Common myeloid progenitor, CD34-positive (primary cell): ENCODE measurements at regions of chr5 and their contacts with region 1.

Region 1: DNA sequence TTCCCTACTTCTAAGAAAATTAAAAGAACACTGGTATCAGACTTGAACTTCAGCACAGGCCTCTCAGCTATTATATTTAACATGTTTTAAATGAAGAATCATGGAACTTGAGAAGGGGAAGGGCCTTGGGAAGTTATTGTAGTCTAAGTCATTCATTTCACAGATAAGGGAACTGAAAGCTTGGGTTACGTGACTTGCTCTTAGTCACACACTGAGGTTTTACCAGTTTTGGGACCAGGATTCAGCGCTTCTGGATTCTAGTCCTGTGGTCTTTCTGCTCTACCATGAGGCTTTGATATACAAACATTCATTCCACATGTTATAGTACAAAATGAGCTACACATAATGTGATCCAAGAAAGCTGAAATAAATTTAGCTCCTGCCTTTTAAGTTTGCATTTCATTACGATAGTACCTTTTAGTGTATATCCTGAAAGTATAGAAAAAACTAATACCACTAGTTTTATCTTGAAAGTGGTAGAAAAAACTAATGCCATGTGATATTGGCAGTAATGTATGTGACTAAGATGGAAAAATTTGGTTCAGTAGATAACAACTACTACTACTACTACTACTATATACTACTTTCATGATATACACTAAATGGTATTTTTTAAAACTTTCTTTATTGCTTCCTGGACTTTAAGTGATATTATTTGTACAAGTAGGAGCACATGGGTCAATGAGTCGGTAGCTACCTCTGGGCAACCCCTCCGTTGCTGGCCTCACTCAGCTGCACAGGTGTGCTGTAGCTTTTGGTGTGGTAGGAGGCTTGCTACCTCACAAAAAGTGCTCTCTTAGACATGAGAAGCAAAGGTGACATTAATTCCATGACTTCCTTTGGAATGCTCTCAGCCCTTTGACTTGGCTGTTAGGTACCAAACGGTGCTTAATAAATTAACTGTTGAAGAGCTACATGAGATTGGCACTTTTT is 40.7 kb downstream of the F2RL2 start:
- DNase-seq: peak; percentile 65 to 89 (median 86)
- H3K4me3 ChIP-seq: peak overlapping the region in 1 of 7 experiments; percentile 24
- H3K27ac ChIP-seq: peak overlapping the region; percentile 0 to 57
- H3K4me1 ChIP-seq: peaks cover 8 to 33% (median 25%) of the 10 kb centered on the region in 4 experiments
- H3K27me3 ChIP-seq: no peaks in the 10 kb centered on the region

Region 2: GRCh38 chr5:76074487-76075065 is 507.9 kb before region 1 on chr5:
- CTCF ChIA-PET with region 1: interaction called, 16 read pairs
- POLR2A ChIA-PET with region 1: no interaction called
- DNase-seq: peak; percentile 45 to 65 (median 65)
- H3K4me3 ChIP-seq: no peak overlapping the region
- H3K27ac ChIP-seq: no peak overlapping the region
- H3K4me1 ChIP-seq: no peaks in the 10 kb centered on the region
- H3K27me3 ChIP-seq: peaks cover 6 to 21% (median 18%) of the 10 kb centered on the region in 5 experiments

Region 3: DNA sequence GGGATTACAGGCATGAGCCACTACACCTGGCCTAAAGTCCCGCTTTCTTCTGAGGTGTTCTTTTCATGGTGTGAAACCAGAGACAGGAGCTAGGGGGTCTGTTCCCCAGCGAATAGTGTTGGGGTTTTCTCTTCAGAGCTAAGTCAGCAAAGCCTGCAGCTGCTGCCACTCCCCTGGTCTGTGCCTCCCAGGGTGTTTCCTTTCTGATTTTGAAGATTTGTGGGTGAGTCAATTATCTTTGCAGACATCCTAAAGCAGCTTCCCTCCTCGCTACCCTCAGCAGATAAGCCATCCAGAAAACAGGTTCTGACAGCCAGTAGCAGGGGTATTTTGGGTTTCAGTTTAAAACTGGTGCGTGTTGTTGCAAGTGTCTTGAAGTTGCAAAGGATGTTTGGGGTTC is 251.4 kb before region 1 on chr5:
- CTCF ChIA-PET with region 1: interaction called, 20 read pairs
- POLR2A ChIA-PET with region 1: interaction called, 3 read pairs
- DNase-seq: peak; percentile 80 to 97 (median 95)
- H3K4me3 ChIP-seq: peak overlapping the region in 3 of 7 experiments; percentile 1 to 54 (median 40)
- H3K27ac ChIP-seq: peak overlapping the region; percentile 36 to 46
- H3K4me1 ChIP-seq: peaks cover 35 to 80% (median 73%) of the 10 kb centered on the region in 4 experiments
- H3K27me3 ChIP-seq: no peaks in the 10 kb centered on the region

Region 4: GRCh38 chr5:76544268-76544926 is 38.1 kb before region 1 on chr5:
- CTCF ChIA-PET with region 1: interaction called, 30 read pairs
- POLR2A ChIA-PET with region 1: interaction called, 3 read pairs
- DNase-seq: peak; percentile 83 to 88 (median 88)
- H3K4me3 ChIP-seq: peak overlapping the region in 5 of 7 experiments; percentile 11 to 62 (median 51)
- H3K27ac ChIP-seq: peak overlapping the region; percentile 90 to 93
- H3K4me1 ChIP-seq: peaks cover 53 to 100% (median 89%) of the 10 kb centered on the region in 4 experiments
- H3K27me3 ChIP-seq: no peaks in the 10 kb centered on the region

Region 5: GRCh38 chr5:76565009-76565408 is 17.5 kb before region 1 on chr5:
- CTCF ChIA-PET with region 1: interaction called, 11 read pairs
- POLR2A ChIA-PET with region 1: no interaction called
- DNase-seq: no peak
- H3K4me3 ChIP-seq: no peak overlapping the region
- H3K27ac ChIP-seq: no peak overlapping the region
- H3K4me1 ChIP-seq: no peaks in the 10 kb centered on the region
- H3K27me3 ChIP-seq: no peaks in the 10 kb centered on the region

Region 6: GRCh38 chr5:76571559-76571958 is 10.9 kb before region 1 on chr5:
- CTCF ChIA-PET with region 1: interaction called, 35 read pairs
- POLR2A ChIA-PET with region 1: interaction called, 5 read pairs
- DNase-seq: peak in 2 of 3 donors; percentile 49 to 55
- H3K4me3 ChIP-seq: no peak overlapping the region
- H3K27ac ChIP-seq: no peak overlapping the region
- H3K4me1 ChIP-seq: peaks cover 0 to 10% (median 3%) of the 10 kb centered on the region in 4 experiments
- H3K27me3 ChIP-seq: no peaks in the 10 kb centered on the region